ENCODE measurements at regions of chr12 and their contacts with region 1.

Region 1: GRCh38 chr12:124379938-124380754 is 85.3 kb downstream of the RFLNA start:
- DNase-seq: no peak
- H3K4me3 ChIP-seq: peak overlapping the region in 1 of 4 donors; percentile 24
- H3K27ac ChIP-seq: peak overlapping the region; percentile 92 to 97 (median 95)
- H3K4me1 ChIP-seq: peaks cover 54 to 71% (median 65%) of the 10 kb centered on the region in 4 donors
- H3K27me3 ChIP-seq: no peaks in the 10 kb centered on the region
- CTCF ChIP-seq: peak; percentile 64 to 71 (median 66)
- EP300 ChIP-seq: no peak
- POLR2A ChIP-seq: no peak

Region 2: DNA sequence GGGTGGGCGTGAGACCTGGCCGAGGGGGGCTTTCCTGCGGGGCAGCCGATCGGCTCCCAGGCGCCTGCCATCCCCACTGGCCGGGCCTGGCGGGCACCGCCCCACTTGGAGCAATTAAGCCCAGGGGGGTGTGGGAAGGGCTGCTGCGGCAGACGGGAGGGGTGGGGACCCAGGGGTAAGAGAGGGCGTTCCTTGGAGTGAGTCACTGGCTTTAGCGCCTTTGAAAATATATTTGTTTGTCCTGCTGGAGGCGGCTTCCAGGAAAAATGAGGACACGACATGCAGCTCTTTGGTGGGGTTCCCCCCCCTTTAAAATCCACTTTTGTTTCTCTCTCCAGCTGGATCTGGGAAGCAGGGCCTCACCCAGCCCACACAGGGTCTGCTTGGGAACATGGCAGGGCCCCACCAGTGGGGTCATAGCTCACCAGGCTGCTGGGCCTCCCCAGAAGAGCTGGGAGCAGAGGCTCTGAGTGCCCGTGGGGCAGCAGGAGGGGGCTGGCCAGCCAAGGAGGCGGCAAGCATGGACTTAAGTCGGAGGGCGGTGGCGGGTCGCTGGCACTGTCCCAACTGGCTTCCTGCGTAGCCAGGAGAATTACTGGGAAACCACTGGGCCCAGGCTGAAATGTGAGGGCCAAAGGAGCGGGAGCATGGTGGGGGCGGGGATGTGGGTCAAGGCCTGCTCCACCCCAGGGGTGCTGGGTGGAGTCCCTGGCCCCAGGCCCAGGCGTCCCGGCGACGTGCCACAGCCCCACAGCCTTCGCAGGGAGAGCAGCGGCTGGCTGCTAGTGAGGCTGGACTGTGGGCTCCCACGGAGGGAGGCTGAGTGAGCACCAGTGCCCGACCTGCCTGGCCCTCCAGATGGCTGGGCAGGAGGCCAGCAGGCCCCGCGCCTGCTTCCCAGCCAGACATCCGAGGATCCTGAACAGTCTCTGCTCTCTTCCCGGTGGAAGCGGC is 42.7 kb after region 1 on chr12:
- intact Hi-C with region 1: loop called (anchors 5 kb)
- DNase-seq: peak; percentile 98
- H3K4me3 ChIP-seq: peak overlapping the region; percentile 23 to 53 (median 30)
- H3K27ac ChIP-seq: peak overlapping the region; percentile 88 to 97 (median 93)
- H3K4me1 ChIP-seq: peaks cover 58 to 79% (median 71%) of the 10 kb centered on the region in 4 donors
- H3K27me3 ChIP-seq: no peaks in the 10 kb centered on the region
- CTCF ChIP-seq: peak in 1 of 3 experiments; percentile 10
- EP300 ChIP-seq: peak; percentile 75
- POLR2A ChIP-seq: no peak

Region 3: DNA sequence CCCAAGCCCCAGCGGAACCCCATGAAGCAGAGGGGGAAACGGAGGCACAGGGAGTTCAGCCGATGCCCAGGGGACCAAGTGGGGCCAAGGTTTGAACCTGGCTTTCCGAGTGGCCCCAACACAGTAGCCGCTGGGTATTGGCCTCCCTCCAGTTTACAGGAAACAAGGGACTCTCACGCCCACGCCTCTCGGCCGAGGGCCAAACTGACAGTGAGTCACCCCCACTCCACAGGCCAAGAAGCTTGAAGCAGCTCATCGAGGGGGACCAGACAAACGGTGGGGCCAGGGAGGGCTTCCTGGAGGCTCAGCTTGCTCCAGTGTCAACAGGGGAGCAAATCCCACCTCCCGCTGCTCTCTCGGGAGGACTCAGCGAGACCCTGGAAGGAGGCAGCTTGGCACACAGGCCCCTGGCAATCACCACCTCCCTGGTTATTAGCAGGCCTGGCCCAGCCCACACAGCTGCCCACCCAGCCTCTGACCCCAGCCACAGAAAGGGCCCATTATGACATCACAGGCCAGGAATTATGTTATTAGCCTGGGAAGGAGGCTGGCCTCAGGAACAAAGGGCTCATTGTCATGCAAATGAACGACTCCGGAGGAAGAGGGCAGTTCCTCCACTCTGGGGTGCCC is 132.6 kb after region 1 on chr12:
- intact Hi-C with region 1: loop called (anchors 5 kb)
- DNase-seq: peak; percentile 97
- H3K4me3 ChIP-seq: peak overlapping the region in 3 of 4 donors; percentile 2 to 10 (median 7)
- H3K27ac ChIP-seq: peak overlapping the region; percentile 83 to 98 (median 92)
- H3K4me1 ChIP-seq: peaks cover 94 to 100% (median 100%) of the 10 kb centered on the region in 4 donors
- H3K27me3 ChIP-seq: no peaks in the 10 kb centered on the region
- CTCF ChIP-seq: no peak
- EP300 ChIP-seq: no peak
- POLR2A ChIP-seq: no peak

Region 4: DNA sequence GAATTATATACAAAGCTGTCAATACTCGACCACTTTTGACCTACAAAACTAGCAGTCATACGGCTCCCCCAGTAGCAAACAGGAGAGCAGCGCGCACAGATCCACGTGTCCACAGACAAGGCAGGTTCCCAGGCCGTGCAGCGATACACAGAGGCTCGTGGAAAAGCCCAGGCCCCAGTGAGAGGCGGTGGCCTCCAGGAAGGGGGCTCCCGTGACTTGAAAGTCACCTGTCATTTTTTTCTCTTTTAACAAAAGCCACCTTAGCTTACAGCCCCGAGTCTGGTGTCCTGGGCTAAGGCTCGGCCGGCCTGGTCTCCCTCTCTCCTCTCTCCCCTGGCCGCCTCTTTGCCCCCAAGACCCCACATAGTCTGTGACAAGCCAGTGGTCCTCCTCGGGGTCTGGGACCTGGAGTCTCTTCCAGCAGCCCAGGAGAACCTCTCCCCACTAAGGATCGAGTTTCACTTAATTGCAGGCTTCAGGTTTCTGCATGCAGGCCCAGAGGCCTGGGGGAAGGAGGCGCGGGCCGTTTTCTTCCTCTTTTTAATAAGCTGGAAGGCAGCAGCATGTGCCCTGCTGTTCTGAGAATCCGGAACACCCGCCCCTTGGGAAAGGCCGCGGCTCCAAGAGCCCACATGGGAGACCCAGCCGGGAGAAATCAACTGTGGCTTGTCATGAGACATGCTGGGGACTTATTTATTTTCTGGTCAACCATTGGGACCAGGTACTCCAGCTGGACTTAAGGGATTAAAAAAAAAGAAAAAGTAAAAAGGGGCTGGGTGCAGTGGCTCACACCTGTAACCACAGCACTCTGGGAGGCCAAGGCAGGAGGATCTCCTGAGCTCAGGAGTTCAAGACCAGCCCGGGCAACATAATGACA is 171.4 kb after region 1 on chr12:
- intact Hi-C with region 1: no loop called
- DNase-seq: peak; percentile 94
- H3K4me3 ChIP-seq: no peak overlapping the region
- H3K27ac ChIP-seq: peak overlapping the region; percentile 71 to 81 (median 78)
- H3K4me1 ChIP-seq: peaks cover 67 to 91% (median 87%) of the 10 kb centered on the region in 4 donors
- H3K27me3 ChIP-seq: no peaks in the 10 kb centered on the region
- CTCF ChIP-seq: no peak
- EP300 ChIP-seq: no peak
- POLR2A ChIP-seq: no peak